ENCODE measurements at regions of chrX and their contacts with region 1.

Region 1: GRCh38 chrX:21708116-21708515 is 49.8 kb downstream of the SMPX start:
- DNase-seq: no peak

Region 2: GRCh38 chrX:20530406-20530921 is 1177.7 kb before region 1 on chrX:
- in situ Hi-C with region 1: loop called (anchors 25 kb)
- DNase-seq: peak; percentile 75

Region 3: DNA sequence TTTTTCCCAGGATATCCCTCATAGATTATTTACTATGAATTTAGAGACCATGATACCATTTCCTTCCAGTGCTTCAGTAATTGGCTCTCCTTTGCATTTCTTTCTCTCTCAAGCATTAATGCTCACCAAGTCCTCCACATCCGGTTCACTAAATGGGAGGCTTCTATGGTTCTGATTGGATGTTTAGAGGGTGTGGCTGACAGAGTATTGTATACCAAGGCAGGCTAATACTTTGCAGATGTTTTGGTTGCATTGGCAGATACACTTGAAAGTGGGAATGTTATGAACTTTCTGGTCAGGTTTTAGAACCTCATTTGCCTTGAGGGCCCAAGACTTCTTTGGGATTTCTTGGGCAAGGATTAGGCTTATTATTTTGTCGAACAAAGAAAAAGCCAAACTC is 588.8 kb after region 1 on chrX:
- in situ Hi-C with region 1: no loop called
- DNase-seq: no peak

Measured in KBM-7 (cell line).